ENCODE measurements at regions of chr3 and their contacts with region 1.

Region 1: GRCh38 chr3:49411968-49412631 is at the starts of genes RHOA and TCTA:
- DNase-seq: peak; percentile 99
- ATAC-seq: peak; percentile 87
- H3K4me3 Mint-ChIP-seq: peak within 1 kb of the TSS; percentile 86
- H3K27ac Mint-ChIP-seq: peak within 1 kb of the TSS; percentile 95
- H3K4me1 Mint-ChIP-seq: peaks cover 64% of the 10 kb centered on the region
- H3K27me3 Mint-ChIP-seq: peaks cover 1% of the 10 kb centered on the region
- total RNA-seq, gene RHOA: 518 to 520 TPM
- total RNA-seq, gene TCTA: 19.6 to 25.2 TPM

Region 2: DNA sequence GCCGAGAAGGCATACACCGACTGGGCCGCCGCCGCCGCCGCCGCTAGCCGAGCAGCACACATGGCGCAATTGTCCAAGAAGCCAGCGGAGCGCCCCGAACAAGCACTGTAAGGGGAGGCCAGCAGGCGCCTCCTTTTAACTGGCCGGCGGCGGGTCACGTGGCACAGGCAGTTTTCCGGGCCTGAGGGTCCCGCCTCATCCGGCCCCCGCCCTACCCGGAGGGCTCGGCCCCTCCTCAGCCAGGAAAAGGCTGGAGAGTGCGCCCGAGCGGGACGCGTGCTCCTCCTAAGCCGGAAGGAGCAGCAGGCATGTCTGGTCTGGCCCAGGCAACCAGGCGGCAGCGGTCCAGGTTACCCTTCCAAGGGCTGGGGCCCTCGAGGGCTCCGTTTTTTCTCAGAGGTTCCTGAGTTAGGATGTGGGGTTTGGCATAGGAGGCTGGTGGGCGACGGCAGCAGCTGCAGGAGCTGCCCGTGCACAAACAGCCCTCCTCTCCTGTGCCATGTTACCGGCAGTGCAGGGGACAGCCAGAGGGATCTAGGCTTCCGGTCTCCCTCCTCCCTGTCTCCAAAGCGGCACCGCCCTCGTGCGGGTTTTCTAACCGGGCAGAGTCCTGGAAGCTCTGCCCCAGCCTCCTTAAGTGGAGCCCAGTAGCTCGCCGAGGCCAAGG is 53.8 kb before region 1 on chr3 and contains the start of gene GPX1:
- CTCF ChIA-PET with region 1: no interaction called
- POLR2A ChIA-PET with region 1: interaction called, 18 read pairs
- DNase-seq: peak; percentile 89
- ATAC-seq: peak; percentile 86
- H3K4me3 Mint-ChIP-seq: peak within 1 kb of the TSS; percentile 95
- H3K27ac Mint-ChIP-seq: peak within 1 kb of the TSS; percentile 88
- H3K4me1 Mint-ChIP-seq: peaks cover 45% of the 10 kb centered on the region
- H3K27me3 Mint-ChIP-seq: no peaks in the 10 kb centered on the region
- total RNA-seq, gene GPX1: 115 to 119 TPM

Region 3: DNA sequence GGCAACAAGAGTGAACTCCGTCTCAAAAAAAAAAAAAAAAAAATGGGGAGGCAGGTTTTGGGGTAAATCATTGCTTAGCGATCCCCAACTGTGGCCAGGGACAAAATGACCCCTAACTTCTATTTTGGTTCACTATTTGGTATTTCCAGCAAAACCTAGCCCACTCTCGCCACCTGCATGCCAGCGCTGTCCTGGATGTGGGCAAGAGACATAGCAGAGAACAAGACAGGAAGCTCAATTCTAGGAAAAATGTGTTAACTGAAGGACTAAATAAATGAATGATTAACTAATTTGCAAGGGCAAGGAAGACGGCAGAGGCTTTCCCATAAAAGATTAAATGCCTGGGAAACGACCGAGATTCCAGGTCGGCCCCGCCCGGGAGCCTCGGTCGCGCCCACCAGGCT is 16.6 kb after region 1 on chr3:
- CTCF ChIA-PET with region 1: interaction called, 11 read pairs
- POLR2A ChIA-PET with region 1: interaction called, 107 read pairs
- DNase-seq: no peak
- ATAC-seq: peak; percentile 6
- H3K4me3 Mint-ChIP-seq: peak overlapping the region; percentile 90
- H3K27ac Mint-ChIP-seq: peak overlapping the region; percentile 93
- H3K4me1 Mint-ChIP-seq: peaks cover 37% of the 10 kb centered on the region
- H3K27me3 Mint-ChIP-seq: no peaks in the 10 kb centered on the region

Region 4: GRCh38 chr3:49445381-49445780 is 33.3 kb after region 1 on chr3:
- CTCF ChIA-PET with region 1: interaction called, 80 read pairs
- POLR2A ChIA-PET with region 1: interaction called, 8 read pairs
- DNase-seq: no peak
- ATAC-seq: no peak
- H3K4me3 Mint-ChIP-seq: no peak overlapping the region
- H3K27ac Mint-ChIP-seq: no peak overlapping the region
- H3K4me1 Mint-ChIP-seq: peaks cover 19% of the 10 kb centered on the region
- H3K27me3 Mint-ChIP-seq: no peaks in the 10 kb centered on the region

Region 5: DNA sequence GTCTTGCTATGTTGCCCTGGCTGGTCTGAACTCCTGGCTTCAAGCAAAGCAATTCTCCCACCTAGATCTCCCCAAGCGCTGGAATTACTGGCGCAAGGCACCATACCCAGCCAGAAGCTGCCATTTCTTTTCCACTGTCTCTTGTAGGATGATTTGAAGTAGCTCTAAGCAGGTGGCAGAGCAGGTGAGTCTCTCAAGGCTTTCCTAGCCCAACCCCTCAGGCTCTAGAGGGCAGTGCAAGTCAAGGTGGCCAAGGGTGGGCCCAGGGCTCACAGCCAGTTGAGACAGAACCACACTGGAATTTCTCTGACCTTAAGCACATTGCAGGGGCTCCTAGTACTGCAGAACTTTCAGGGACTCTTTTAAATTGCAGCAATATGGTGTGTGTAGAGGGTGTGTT is 42.4 kb after region 1 on chr3:
- CTCF ChIA-PET with region 1: interaction called, 80 read pairs
- POLR2A ChIA-PET with region 1: interaction called, 7 read pairs
- DNase-seq: no peak
- ATAC-seq: no peak
- H3K4me3 Mint-ChIP-seq: no peak overlapping the region
- H3K27ac Mint-ChIP-seq: no peak overlapping the region
- H3K4me1 Mint-ChIP-seq: peaks cover 3% of the 10 kb centered on the region
- H3K27me3 Mint-ChIP-seq: no peaks in the 10 kb centered on the region

Region 6: GRCh38 chr3:49469936-49470713 is 58.0 kb after region 1 on chr3 and contains the start of gene DAG1:
- CTCF ChIA-PET with region 1: interaction called, 16 read pairs
- POLR2A ChIA-PET with region 1: interaction called, 4 read pairs
- DNase-seq: peak; percentile 96
- ATAC-seq: peak; percentile 92
- H3K4me3 Mint-ChIP-seq: peak within 1 kb of the TSS; percentile 86
- H3K27ac Mint-ChIP-seq: peak within 1 kb of the TSS; percentile 88
- H3K4me1 Mint-ChIP-seq: peaks cover 23% of the 10 kb centered on the region
- H3K27me3 Mint-ChIP-seq: no peaks in the 10 kb centered on the region
- total RNA-seq, gene DAG1: 18.8 to 19.7 TPM

Region 7: DNA sequence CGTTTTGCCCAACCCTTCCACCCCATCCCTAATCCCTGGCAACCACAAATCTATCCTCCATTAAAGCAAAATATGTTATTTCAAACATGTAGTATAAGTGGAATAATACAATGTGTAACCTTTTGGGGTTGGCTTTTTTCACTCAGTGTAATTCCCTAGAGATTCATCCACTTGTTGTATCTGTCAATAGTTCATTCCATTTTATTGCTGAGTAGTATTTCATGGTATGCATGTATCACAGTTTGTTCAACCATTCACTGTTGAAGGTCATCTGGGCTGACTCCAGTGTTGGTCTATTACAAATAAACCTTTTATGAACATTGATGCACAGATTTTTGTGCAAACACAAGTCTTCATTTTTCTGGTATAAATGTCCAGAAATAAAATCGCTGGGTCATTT is 180.9 kb after region 1 on chr3:
- CTCF ChIA-PET with region 1: no interaction called
- POLR2A ChIA-PET with region 1: no interaction called
- DNase-seq: no peak
- ATAC-seq: no peak
- H3K4me3 Mint-ChIP-seq: no peak overlapping the region
- H3K27ac Mint-ChIP-seq: no peak overlapping the region
- H3K4me1 Mint-ChIP-seq: peaks cover 4% of the 10 kb centered on the region
- H3K27me3 Mint-ChIP-seq: peaks cover 10% of the 10 kb centered on the region

Region 8: GRCh38 chr3:49712631-49713319 is 300.7 kb after region 1 on chr3:
- CTCF ChIA-PET with region 1: no interaction called
- POLR2A ChIA-PET with region 1: no interaction called
- DNase-seq: peak; percentile 60
- ATAC-seq: peak; percentile 39
- H3K4me3 Mint-ChIP-seq: no peak overlapping the region
- H3K27ac Mint-ChIP-seq: peak overlapping the region; percentile 72
- H3K4me1 Mint-ChIP-seq: peaks cover 31% of the 10 kb centered on the region
- H3K27me3 Mint-ChIP-seq: no peaks in the 10 kb centered on the region

Measured in activated CD8-positive, alpha-beta T cell treated with anti-CD3 and anti-CD28 coated beads, Interleukin-2, amount 10 ng/mL, durations not matched to agents 7 days and 5 days (primary cell).